Activated CD4-positive, alpha-beta memory T cell treated with anti-CD3 and anti-CD28 coated beads, Interleukin-2, amount 10 ng/mL, durations not matched to agents 7 days and 5 days (primary cell): ENCODE measurements at regions of chr2 and their contacts with region 1.

Region 1: GRCh38 chr2:121530212-121530705 is 421 bp upstream of the RNU4ATAC start:
- DNase-seq: peak; percentile 88
- H3K4me3 Mint-ChIP-seq: peak overlapping the region; percentile 88
- H3K27ac Mint-ChIP-seq: peak overlapping the region; percentile 96
- H3K4me1 Mint-ChIP-seq: peaks cover 63% of the 10 kb centered on the region
- H3K27me3 Mint-ChIP-seq: no peaks in the 10 kb centered on the region

Region 2: DNA sequence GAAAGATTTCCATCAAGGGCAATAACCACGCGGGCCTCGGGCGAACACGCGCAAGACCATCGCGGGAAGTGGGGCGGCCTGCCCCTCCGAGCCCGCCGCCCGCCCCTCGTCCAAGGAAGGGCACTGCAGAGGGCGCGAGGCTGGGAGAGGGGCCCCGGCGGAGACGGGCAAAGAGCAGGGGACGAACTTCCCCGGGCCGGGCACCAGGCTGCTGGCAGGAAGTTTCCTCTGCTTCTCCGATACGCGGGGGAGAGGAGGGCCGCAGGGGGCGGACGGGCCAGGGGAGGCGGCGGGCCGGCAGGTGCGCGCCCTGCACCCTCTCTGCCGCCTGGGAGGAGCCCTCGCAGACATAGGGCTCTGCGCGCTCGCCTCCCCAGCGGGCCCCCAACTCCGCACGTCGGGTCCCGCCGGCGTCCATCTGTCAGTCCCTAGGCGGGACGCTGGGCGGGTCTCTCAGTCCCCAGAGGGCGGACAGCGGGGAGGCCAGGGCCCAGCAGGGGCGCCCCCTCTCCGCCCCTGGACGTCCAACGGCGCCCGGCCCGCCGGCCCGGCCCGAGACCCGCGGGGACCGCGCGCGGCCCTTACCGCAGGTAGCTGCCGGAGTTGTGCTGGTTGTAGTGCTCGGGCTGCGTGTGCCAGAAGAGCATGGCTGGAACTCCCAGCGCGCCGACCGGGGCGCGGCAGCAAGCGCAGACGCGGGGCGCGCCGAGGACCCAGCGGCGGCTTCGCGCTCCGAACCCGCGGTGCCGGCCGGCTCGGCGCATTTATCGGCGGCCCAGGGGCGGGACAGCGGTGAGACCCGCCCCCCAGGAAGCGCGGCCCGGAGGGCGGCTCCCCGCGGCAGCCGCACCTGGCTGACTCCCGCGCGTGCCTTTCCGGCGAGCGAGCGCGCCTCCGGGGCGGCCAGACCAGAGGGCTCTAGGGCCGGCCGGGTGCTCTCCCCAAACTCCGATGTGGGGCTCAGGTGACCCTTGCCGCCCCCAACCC is 245.5 kb before region 1 on chr2 and contains the start of gene TFCP2L1:
- CTCF ChIA-PET with region 1: no interaction called
- POLR2A ChIA-PET with region 1: no interaction called
- DNase-seq: peak; percentile 48
- H3K4me3 Mint-ChIP-seq: peak within 1 kb of the TSS; percentile 49
- H3K27ac Mint-ChIP-seq: no peak within 1 kb of the TSS
- H3K4me1 Mint-ChIP-seq: peaks cover 8% of the 10 kb centered on the region
- H3K27me3 Mint-ChIP-seq: peaks cover 42% of the 10 kb centered on the region
- total RNA-seq, gene TFCP2L1: 0.08 to 0.28 TPM

Region 3: DNA sequence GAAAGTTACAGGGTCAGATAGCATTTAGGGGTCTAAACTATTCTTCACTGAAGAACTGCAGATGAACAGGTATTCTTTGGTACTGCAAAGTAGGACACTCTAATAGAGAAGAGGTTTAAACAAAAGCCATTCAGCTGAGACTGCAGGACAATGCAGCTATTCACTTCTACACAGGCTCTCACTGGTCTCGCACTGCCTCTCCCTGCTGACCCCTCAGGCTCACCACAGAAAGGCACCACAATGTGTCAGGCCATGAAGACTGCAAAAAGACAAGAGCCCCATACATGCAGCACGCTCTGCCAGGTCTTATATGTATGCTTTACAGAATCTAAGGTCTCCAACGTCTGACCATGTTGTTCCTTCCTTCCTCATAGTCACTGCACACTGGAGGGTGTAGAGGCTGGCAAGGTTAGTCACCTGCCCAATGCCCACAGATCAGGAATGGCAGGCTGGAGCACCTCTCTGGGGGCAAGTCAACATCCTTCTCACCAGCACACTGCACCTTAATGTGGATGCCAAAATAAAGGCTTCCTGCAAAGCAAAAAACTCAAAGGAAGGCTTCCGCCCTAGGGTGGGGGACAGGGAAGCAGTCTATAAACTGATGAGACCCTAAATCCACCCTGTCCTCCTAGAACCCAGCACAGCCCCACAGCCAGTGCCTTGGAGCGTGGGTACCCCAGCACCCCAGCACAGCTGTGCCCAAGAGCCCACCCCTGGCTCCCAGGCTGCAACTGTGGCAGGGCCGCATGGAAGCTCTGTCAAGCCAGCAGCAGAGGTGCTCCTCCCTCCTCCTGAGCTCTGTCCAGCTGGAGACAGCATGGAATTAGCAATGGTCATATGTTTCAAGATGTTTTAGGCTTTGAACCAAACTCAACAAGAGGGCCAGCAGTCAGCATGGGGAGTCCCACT is 10.3 kb before region 1 on chr2:
- CTCF ChIA-PET with region 1: interaction called, 7 read pairs
- POLR2A ChIA-PET with region 1: interaction called, 19 read pairs
- DNase-seq: no peak
- H3K4me3 Mint-ChIP-seq: no peak overlapping the region
- H3K27ac Mint-ChIP-seq: no peak overlapping the region
- H3K4me1 Mint-ChIP-seq: peaks cover 6% of the 10 kb centered on the region
- H3K27me3 Mint-ChIP-seq: no peaks in the 10 kb centered on the region

Region 4: DNA sequence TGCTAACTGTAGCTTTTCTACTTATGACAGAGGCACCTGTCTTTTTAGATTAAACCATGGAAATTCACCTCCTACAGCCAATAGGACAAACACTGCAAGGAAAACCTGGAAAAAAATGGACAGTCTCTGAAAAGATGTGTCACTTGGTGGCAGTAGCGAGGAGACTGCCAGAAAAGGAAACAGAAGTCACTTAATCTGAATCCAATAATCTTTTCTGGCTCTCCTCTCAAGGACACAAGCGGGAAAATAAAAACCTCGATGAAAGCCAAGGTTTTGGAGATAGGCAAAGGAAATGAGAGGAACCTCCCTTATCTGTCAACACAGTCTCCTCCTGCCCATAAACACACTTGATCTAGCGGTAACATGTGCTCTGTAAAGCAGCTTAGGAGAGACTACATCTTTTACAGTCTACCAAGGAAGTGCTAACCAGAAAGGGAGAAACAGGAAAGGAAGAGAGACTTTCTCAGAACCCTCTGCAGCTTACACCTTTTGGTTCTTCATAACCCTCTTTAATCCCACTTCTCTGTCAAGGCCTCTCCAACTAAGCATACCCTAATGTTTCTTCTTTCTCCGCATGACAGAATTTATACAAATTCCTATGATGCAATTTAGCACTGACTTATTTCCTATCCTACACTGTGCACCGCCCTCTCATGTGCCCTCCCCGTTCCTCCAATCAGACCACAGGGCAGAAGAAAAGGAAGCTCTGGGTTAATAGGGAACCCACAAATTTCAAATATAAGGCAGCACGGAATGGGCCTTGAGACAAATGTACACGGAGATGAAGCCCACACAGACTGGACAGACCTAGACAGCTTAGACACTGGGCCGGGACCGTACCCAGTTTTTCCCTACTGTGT is 66.2 kb after region 1 on chr2:
- CTCF ChIA-PET with region 1: interaction called, 4 read pairs
- POLR2A ChIA-PET with region 1: interaction called, 20 read pairs
- DNase-seq: peak; percentile 22
- H3K4me3 Mint-ChIP-seq: peak overlapping the region; percentile 30
- H3K27ac Mint-ChIP-seq: peak overlapping the region; percentile 82
- H3K4me1 Mint-ChIP-seq: peaks cover 44% of the 10 kb centered on the region
- H3K27me3 Mint-ChIP-seq: no peaks in the 10 kb centered on the region

Region 5: DNA sequence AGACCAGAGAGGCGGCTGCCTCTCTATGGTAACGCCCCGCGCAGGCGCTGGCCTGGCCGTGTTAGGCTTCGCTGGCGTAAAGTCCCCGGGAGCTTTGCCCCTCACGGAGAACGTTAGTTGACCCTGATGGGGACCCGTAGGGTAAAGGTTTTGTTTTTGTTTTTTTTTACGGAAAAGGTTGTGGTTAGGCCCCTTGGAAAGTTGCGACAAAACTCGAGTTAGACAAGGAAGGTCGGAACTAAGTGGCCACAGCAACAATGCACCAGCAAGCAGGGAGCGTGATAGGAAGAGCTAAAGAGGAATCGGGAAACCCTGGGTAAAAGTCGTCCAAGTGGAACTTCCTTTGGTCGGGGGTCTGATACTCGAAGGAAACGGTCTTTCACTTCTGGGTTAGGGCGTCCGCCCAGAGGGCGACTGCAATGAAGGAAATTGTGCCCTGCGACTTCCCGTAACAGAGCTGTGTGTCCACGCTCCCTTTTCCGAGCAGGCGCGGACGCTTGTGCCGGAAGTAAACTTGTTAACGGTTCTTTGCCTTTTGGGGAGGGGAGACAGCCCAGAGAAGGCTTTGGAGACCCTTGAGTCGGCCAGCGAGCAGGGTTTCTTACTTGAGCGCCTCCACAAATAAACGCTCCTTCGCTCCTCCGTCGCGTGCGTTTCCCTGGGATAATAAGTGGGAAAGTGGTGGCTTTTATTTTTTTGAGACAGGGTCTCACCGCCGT is 119.5 kb after region 1 on chr2:
- CTCF ChIA-PET with region 1: interaction called, 28 read pairs
- POLR2A ChIA-PET with region 1: interaction called, 224 read pairs
- DNase-seq: peak; percentile 97
- H3K4me3 Mint-ChIP-seq: peak overlapping the region; percentile 88
- H3K27ac Mint-ChIP-seq: peak overlapping the region; percentile 100
- H3K4me1 Mint-ChIP-seq: peaks cover 68% of the 10 kb centered on the region
- H3K27me3 Mint-ChIP-seq: no peaks in the 10 kb centered on the region

Region 6: GRCh38 chr2:121699421-121700333 is 169.4 kb after region 1 on chr2:
- CTCF ChIA-PET with region 1: interaction called, 22 read pairs
- POLR2A ChIA-PET with region 1: interaction called, 165 read pairs
- DNase-seq: peak; percentile 95
- H3K4me3 Mint-ChIP-seq: peak overlapping the region; percentile 79
- H3K27ac Mint-ChIP-seq: peak overlapping the region; percentile 97
- H3K4me1 Mint-ChIP-seq: peaks cover 50% of the 10 kb centered on the region
- H3K27me3 Mint-ChIP-seq: no peaks in the 10 kb centered on the region

Region 7: GRCh38 chr2:121731366-121731765 is 201.1 kb after region 1 on chr2:
- CTCF ChIA-PET with region 1: interaction called, 5 read pairs
- POLR2A ChIA-PET with region 1: interaction called, 87 read pairs
- DNase-seq: no peak
- H3K4me3 Mint-ChIP-seq: no peak overlapping the region
- H3K27ac Mint-ChIP-seq: peak overlapping the region; percentile 8
- H3K4me1 Mint-ChIP-seq: peaks cover 50% of the 10 kb centered on the region
- H3K27me3 Mint-ChIP-seq: no peaks in the 10 kb centered on the region

Region 8: DNA sequence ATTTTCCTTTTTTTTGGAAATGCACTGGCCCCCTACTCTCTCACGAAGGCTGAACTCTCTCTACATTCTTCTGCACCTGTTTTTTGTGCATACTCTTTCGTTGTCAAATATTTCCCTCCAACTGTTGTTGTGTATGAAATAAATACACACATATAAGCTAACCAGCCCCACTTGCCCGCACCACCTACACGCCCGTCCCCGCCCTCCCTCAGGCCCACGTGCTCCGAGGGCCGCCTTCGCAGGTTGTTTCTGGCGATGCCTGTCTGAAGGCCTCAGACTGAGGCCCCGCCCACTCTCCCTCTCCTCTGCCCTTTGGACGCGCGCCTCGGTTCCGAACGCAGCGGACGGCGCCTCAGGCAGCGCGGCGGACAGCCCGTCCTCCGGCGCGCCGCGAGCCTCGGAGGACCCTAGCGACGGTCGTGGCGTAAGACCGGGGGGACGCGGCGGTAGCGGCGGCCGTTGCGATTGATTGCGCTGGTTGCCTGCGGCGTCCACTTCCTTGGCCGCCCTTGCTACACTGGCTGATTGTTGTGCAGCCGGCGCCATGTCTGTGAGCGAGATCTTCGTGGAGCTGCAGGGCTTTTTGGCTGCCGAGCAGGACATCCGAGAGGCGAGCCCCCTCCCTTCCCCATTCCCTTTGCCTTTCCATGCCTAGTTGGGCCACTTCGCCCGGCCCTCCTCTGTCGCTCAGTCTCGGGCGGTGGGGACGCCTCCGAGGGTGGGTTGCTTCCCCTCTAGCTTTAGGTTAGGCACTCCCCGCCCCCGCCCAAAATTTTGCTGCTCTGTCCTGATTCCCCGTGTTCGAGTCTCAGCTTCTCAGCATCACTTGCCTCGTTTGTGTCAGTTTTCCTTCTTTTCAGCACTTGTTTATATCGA is 225.2 kb after region 1 on chr2 and contains the start of gene TSN:
- CTCF ChIA-PET with region 1: interaction called, 4 read pairs
- POLR2A ChIA-PET with region 1: interaction called, 28 read pairs
- DNase-seq: peak; percentile 98
- H3K4me3 Mint-ChIP-seq: peak within 1 kb of the TSS; percentile 86
- H3K27ac Mint-ChIP-seq: peak within 1 kb of the TSS; percentile 88
- H3K4me1 Mint-ChIP-seq: peaks cover 26% of the 10 kb centered on the region
- H3K27me3 Mint-ChIP-seq: no peaks in the 10 kb centered on the region
- total RNA-seq, gene TSN: 52.7 to 56.7 TPM